Activated CD4-positive, alpha-beta memory T cell treated with anti-CD3 and anti-CD28 coated beads for 36 hours (primary cell): ENCODE measurements at regions of chr3 and their contacts with region 1.

Region 1: DNA sequence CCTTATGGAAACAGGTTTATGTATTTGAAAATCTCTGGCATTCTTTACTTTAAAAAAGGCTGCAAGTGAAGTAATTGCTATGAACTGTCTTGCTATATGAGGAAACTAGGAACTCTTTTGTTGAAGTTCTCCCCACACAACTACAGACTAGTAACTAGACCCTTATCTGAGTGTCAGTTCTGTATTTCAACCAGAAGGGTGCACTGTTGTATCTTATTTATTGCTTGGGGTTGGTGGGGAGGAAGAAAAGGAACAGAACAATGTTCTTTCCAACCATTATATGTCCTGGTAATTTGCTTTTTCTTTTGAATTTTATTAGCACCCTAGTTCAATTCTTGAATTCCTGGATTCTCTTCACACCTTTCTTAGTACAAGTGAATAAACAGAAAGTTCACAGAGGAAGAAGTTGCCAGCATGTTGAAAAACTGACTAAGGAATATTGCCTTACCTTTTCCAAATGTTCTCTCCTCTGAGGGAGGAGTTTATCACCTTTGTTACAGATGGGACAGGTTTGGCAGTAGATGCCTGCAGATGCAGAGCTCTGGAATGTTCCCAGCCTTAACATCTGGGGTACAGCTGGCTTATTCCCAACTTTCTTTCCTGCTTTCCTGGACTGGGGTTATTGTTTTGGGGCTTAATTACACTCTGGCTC is 162.4 kb upstream of the CFAP20DC start:
- DNase-seq: no peak
- H3K4me3 Mint-ChIP-seq: no peak overlapping the region
- H3K27ac Mint-ChIP-seq: no peak overlapping the region
- H3K4me1 Mint-ChIP-seq: no peaks in the 10 kb centered on the region
- H3K27me3 Mint-ChIP-seq: peaks cover 8% of the 10 kb centered on the region

Region 2: DNA sequence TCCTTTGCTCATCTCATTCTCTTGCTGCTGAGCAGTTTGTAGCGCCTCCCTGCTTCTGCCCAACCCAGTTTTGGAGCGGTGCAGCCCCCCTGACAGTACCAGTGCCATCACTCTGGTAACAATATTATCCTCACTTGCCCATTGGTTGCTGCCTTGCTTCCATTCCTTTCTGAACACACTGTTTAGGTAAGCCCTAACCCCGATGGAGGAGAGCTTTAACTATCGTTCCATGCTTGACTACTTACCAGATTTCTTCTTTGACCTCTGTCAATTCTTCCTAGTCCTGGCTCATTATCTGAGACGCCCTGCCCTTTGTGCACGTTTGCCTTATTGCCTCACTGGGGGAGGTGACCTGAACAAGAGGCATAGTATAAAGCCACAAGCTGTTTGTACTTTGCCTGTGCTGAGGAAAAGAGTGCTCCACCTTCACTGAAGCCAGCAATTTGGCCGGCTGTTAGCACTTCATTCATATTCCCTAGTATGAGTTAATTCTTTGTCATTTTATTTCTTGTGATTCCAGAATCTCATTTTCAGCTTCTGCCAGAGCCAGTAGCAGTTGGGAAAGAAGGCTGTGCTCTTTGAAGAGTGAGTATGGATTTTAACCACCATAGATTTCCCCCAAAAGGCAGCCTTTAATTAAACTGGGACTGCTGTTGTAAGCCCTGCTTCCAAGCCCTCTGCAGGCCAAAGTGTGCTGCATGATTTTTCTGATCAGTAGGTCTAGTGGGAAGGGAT is 962.7 kb before region 1 on chr3:
- CTCF ChIA-PET with region 1: no interaction called
- POLR2A ChIA-PET with region 1: no interaction called
- intact Hi-C with region 1: no loop called
- DNase-seq: no peak
- H3K4me3 Mint-ChIP-seq: no peak overlapping the region
- H3K27ac Mint-ChIP-seq: no peak overlapping the region
- H3K4me1 Mint-ChIP-seq: peaks cover 3% of the 10 kb centered on the region
- H3K27me3 Mint-ChIP-seq: no peaks in the 10 kb centered on the region

Region 3: DNA sequence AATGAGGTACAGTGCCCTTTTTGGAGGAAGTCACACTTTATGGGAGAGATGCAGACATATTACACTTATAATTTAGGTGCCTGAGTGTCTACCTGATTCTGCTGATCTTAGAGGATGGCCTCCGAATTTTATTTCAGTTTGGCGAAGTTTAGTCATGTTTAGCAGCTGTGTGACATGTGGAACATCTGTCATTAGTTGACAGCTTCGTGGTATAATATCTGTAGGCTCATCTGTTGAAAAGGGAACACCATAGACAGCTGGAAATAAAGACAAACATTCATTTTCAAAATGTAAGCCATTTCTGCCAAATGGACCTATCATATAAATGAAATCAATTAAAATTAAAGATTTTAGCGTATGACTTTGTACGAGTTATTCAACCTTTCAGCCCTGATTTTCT is 327.8 kb before region 1 on chr3:
- CTCF ChIA-PET with region 1: no interaction called
- POLR2A ChIA-PET with region 1: no interaction called
- intact Hi-C with region 1: no loop called
- DNase-seq: no peak
- H3K4me3 Mint-ChIP-seq: no peak overlapping the region
- H3K27ac Mint-ChIP-seq: no peak overlapping the region
- H3K4me1 Mint-ChIP-seq: no peaks in the 10 kb centered on the region
- H3K27me3 Mint-ChIP-seq: no peaks in the 10 kb centered on the region

Region 4: GRCh38 chr3:58994746-58995330 is 217.4 kb before region 1 on chr3:
- CTCF ChIA-PET with region 1: interaction called, 3 read pairs
- POLR2A ChIA-PET with region 1: no interaction called
- intact Hi-C with region 1: loop called (anchors 10 kb)
- DNase-seq: peak; percentile 19
- H3K4me3 Mint-ChIP-seq: no peak overlapping the region
- H3K27ac Mint-ChIP-seq: no peak overlapping the region
- H3K4me1 Mint-ChIP-seq: peaks cover 7% of the 10 kb centered on the region
- H3K27me3 Mint-ChIP-seq: peaks cover 1% of the 10 kb centered on the region

Region 5: DNA sequence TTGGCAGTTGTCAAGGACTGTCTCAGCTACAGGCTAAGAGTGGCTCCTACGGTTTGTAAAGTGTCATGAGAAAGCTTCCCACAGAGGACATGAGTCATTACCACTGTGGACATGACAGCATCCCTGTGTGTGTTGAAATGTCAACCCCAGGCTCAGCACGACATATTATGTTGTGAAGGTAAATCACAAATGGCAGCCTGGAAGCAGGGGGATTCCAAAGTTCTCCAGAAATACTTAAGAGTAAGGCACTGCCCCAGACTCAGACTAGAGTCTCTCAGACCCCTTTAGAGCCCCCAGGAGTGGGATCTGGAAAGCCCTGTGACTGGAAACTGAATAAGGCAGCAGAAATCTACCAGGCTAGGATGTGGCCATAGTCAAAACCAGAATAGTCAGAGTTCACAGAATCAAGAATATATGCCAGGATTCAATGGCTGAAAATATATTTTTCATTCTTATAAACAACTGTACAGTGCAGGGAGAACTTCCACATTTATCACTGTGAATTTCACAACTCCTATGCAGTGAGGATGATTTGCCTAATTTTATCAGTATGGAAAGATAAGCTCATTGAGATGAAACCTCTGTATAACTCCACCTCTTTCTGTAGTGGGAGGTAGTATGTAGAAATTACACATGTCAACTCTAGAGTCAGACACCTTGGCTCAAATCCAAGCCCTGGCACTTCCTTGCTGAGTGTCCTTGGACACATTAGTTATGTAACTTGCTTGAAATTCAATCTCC is 74.7 kb after region 1 on chr3:
- CTCF ChIA-PET with region 1: no interaction called
- POLR2A ChIA-PET with region 1: no interaction called
- intact Hi-C with region 1: loop called (anchors 5 kb)
- DNase-seq: peak; percentile 52
- H3K4me3 Mint-ChIP-seq: no peak overlapping the region
- H3K27ac Mint-ChIP-seq: peak overlapping the region; percentile 18
- H3K4me1 Mint-ChIP-seq: peaks cover 35% of the 10 kb centered on the region
- H3K27me3 Mint-ChIP-seq: no peaks in the 10 kb centered on the region

Region 6: DNA sequence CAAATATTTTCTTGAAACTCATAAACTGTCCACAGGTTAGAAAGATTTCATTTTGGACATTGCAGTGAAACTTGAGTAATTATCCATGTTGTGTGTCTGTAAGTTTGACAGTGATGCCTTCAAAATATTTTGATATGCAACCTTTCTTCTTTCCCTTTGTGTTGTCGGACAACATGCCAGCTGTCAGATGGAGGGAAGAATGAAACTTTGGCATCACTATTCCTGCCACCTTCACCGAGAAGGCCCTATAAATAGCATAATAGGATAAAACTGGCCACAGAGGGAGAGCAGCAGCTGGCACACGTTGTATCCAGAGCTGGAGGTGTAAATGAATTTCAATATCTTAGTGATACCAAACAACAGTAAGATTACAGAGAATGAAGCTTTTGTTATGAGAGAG is 274.3 kb after region 1 on chr3:
- CTCF ChIA-PET with region 1: no interaction called
- POLR2A ChIA-PET with region 1: no interaction called
- intact Hi-C with region 1: no loop called
- DNase-seq: no peak
- H3K4me3 Mint-ChIP-seq: no peak overlapping the region
- H3K27ac Mint-ChIP-seq: no peak overlapping the region
- H3K4me1 Mint-ChIP-seq: peaks cover 5% of the 10 kb centered on the region
- H3K27me3 Mint-ChIP-seq: no peaks in the 10 kb centered on the region

Region 7: GRCh38 chr3:59575113-59576001 is 363.1 kb after region 1 on chr3:
- CTCF ChIA-PET with region 1: interaction called, 6 read pairs
- POLR2A ChIA-PET with region 1: no interaction called
- intact Hi-C with region 1: loop called (anchors 1 kb)
- DNase-seq: peak; percentile 90
- H3K4me3 Mint-ChIP-seq: no peak overlapping the region
- H3K27ac Mint-ChIP-seq: no peak overlapping the region
- H3K4me1 Mint-ChIP-seq: peaks cover 4% of the 10 kb centered on the region
- H3K27me3 Mint-ChIP-seq: no peaks in the 10 kb centered on the region

Region 8: DNA sequence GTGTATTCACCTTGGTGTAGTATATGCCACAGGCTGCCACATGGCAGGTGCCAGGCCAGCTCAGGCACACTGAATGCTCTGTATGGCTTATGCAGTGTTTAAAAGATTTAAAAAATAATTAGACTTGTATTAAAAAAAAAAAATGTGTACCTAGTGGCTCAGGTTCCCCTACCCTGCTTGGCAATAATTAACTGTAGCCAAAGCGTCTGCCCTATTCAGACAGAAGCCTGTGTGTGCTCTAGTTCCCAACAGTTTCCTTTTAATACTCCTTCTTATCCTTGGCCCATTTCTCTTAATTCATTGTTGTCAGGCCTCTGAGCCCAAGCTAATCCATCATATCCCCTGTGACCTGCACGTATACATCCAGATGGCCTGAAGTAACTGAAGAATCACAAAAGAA is 589.8 kb after region 1 on chr3:
- CTCF ChIA-PET with region 1: no interaction called
- POLR2A ChIA-PET with region 1: no interaction called
- intact Hi-C with region 1: loop called (anchors 2 kb)
- DNase-seq: no peak
- H3K4me3 Mint-ChIP-seq: no peak overlapping the region
- H3K27ac Mint-ChIP-seq: no peak overlapping the region
- H3K4me1 Mint-ChIP-seq: no peaks in the 10 kb centered on the region
- H3K27me3 Mint-ChIP-seq: no peaks in the 10 kb centered on the region

Region 9: GRCh38 chr3:59809710-59810444 is 597.6 kb after region 1 on chr3:
- CTCF ChIA-PET with region 1: interaction called, 28 read pairs
- POLR2A ChIA-PET with region 1: no interaction called
- intact Hi-C with region 1: no loop called
- DNase-seq: no peak
- H3K4me3 Mint-ChIP-seq: no peak overlapping the region
- H3K27ac Mint-ChIP-seq: no peak overlapping the region
- H3K4me1 Mint-ChIP-seq: no peaks in the 10 kb centered on the region
- H3K27me3 Mint-ChIP-seq: no peaks in the 10 kb centered on the region

Region 10: GRCh38 chr3:59857589-59858346 is 645.5 kb after region 1 on chr3:
- CTCF ChIA-PET with region 1: interaction called, 54 read pairs
- POLR2A ChIA-PET with region 1: no interaction called
- intact Hi-C with region 1: loop called (anchors 1 kb)
- DNase-seq: peak; percentile 84
- H3K4me3 Mint-ChIP-seq: no peak overlapping the region
- H3K27ac Mint-ChIP-seq: no peak overlapping the region
- H3K4me1 Mint-ChIP-seq: peaks cover 11% of the 10 kb centered on the region
- H3K27me3 Mint-ChIP-seq: no peaks in the 10 kb centered on the region